ENCODE measurements at regions of chr13 and their contacts with region 1.

Region 1: GRCh38 chr13:97432917-97433726 is 847 bp upstream of the RAP2A start:
- DNase-seq: peak; percentile 100
- ATAC-seq: peak; percentile 86
- H3K4me3 ChIP-seq: peak overlapping the region; percentile 82
- H3K27ac ChIP-seq: peak overlapping the region; percentile 98
- H3K4me1 ChIP-seq: peaks cover 6% of the 10 kb centered on the region
- H3K27me3 ChIP-seq: no peaks in the 10 kb centered on the region
- CTCF ChIP-seq: no peak
- EP300 ChIP-seq: peak; percentile 45 to 61; a peak in 3 of 4 replicates
- POLR2A ChIP-seq: peak; percentile 74
- RAD21 ChIP-seq: no peak

Region 2: DNA sequence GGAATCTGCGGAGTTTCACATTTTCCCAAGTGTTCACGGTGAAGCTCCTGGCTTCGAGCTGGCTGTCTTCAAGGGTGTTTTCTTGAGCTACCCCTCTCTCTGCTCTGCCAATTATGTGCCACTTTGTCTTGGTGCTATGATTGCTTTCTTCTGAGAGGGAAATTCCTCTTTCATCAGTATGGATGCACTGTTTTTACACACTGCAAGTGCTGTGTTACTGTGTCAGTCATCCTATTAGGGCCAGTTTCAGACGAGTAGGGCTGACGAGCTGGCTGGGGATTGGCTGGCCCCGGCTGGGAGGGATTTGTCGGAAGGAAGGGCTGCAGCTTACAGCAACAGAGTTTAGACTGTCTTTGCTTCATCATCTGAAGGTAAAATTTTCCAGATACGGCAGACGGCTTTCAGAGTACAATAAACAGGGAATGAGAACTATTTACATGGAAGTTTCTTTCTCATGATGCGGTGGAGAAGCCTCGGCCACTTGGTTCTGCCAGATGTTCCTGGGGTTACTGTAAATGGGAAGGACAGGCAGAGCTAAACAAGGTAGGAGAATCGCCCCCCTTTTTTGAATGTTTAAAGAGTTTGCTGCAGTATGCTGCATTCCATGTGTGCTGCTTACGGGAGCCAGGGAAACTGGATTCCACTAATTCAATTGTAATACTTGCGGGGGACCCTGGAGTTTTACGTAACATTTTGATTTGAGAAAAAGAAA is 211.0 kb before region 1 on chr13 and contains the start of gene MBNL2:
- CTCF ChIA-PET with region 1: interaction called, 6 read pairs
- POLR2A ChIA-PET with region 1: interaction called, 37 read pairs
- RAD21 ChIA-PET with region 1: interaction called, 20 read pairs
- SMC1A ChIA-PET with region 1: interaction called, 29 read pairs
- in situ Hi-C with region 1: no loop called
- intact Hi-C with region 1: loop called (anchors 2 kb)
- DNase-seq: peak; percentile 77
- ATAC-seq: peak; percentile 92
- H3K4me3 ChIP-seq: peak within 1 kb of the TSS; percentile 70
- H3K27ac ChIP-seq: peak within 1 kb of the TSS; percentile 76
- H3K4me1 ChIP-seq: peaks cover 7% of the 10 kb centered on the region; the same call in 1 of the 2 replicates
- H3K27me3 ChIP-seq: no peaks in the 10 kb centered on the region
- CTCF ChIP-seq: no peak
- EP300 ChIP-seq: 0 out of 4 replicates have a peak, but pooled peaks of 1 of the 2 experiments have one; percentile 15
- POLR2A ChIP-seq: peak; percentile 56
- RAD21 ChIP-seq: no peak
- polyA plus RNA-seq, gene MBNL2: 1.6 to 2.1 TPM

Region 3: DNA sequence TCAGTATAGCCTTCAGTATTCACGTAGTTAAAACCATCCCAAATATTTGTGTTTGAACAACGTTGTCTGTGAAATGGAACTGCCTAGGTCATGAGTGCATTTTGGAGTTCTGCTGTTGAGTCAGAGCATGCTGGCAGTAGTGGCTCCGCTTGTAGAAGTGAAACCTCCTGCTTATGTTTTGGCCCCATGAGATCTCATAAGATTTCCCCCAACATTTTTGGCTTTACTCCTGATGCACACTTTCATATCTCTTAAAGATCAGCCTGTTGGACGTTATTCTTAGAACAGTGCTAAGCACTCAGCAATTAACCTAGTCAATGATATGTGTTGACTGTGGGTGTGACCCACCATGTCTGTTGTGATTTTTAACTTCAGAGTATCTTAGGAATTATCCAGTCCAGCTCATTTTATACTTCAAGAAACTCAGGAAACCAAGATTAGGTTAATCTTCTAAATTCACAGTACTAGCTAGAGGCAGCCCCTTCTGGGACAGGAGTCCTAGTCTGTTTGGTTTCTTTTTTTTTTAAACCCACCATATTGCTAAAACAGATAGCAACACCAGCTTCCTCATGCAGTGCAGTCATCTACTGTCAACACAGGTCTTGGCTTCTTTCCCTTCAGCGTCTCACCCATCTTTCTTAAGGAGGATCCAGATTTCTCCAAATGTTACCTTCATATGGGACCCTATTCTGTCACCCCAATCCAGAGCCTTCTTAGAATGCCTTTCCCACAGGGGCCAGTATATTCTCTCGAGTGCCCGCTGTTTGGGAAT is 27.1 kb after region 1 on chr13:
- CTCF ChIA-PET with region 1: interaction called, 17 read pairs
- POLR2A ChIA-PET with region 1: interaction called, 108 read pairs
- RAD21 ChIA-PET with region 1: interaction called, 179 read pairs
- SMC1A ChIA-PET with region 1: interaction called, 165 read pairs
- in situ Hi-C with region 1: no loop called
- intact Hi-C with region 1: loop called (anchors 1 kb)
- DNase-seq: peak; percentile 91
- ATAC-seq: peak; percentile 94
- H3K4me3 ChIP-seq: peak overlapping the region; percentile 53
- H3K27ac ChIP-seq: peak overlapping the region; percentile 92
- H3K4me1 ChIP-seq: peaks cover 39% of the 10 kb centered on the region
- H3K27me3 ChIP-seq: no peaks in the 10 kb centered on the region
- CTCF ChIP-seq: no peak
- EP300 ChIP-seq: peak; percentile 82 to 85
- POLR2A ChIP-seq: no peak
- RAD21 ChIP-seq: peak; percentile 9; the same call in 1 of the 2 replicates

Region 4: DNA sequence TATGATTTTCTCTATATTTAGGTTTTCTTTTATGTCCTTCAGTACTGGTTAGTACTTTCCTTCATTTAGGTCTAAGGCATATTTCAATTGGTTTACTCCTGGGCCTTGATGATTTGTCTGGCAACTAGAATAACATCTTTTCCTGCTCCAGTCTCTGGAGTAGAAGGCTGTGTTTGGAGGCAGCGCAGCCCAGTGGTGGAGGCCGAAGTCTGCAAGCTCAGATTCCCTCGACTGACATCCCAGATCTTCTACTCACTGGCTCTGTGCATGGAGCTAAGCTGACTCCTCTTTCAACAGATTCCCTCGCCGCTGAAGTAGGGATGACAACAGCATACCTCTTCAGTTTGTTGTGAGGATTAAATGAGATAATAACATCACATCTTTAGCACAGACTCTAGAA is 141.8 kb after region 1 on chr13:
- CTCF ChIA-PET with region 1: interaction called, 15 read pairs
- POLR2A ChIA-PET with region 1: interaction called, 12 read pairs
- RAD21 ChIA-PET with region 1: interaction called, 14 read pairs
- SMC1A ChIA-PET with region 1: interaction called, 11 read pairs
- in situ Hi-C with region 1: no loop called
- intact Hi-C with region 1: no loop called
- DNase-seq: no peak
- ATAC-seq: peak; percentile 89
- H3K4me3 ChIP-seq: no peak overlapping the region
- H3K27ac ChIP-seq: no peak overlapping the region
- H3K4me1 ChIP-seq: no peaks in the 10 kb centered on the region
- H3K27me3 ChIP-seq: no peaks in the 10 kb centered on the region; a peak in 1 of 4 replicates
- CTCF ChIP-seq: peak; percentile 57 to 82 (median 75); a peak in 5 of 6 replicates
- EP300 ChIP-seq: no peak
- POLR2A ChIP-seq: no peak
- RAD21 ChIP-seq: peak; percentile 81

Region 5: DNA sequence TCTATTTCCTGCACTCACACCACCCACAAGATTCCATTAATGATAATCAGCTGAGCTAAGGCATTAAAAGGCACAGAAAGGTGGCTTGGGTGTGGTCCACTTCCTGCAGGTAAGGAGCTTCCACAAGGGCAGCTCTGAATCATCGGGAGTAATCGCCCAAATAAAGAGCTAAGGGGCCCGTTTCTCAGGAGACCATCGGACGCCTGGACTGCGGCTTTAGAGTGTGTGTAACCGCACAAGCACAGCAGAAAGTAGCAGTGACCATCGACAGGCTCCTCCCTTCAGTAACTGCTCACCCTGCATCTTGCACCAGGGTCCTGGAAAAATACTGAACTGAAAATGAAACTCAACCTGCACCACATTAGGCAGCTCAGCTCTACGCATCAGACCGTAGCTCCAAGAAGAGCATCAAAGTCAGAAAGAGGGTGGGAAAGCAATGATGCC is 1137.8 kb after region 1 on chr13:
- CTCF ChIA-PET with region 1: interaction called, 3 read pairs
- POLR2A ChIA-PET with region 1: no interaction called
- RAD21 ChIA-PET with region 1: no interaction called
- SMC1A ChIA-PET with region 1: no interaction called
- in situ Hi-C with region 1: loop called (anchors 25 kb)
- intact Hi-C with region 1: no loop called
- DNase-seq: peak; percentile 92
- ATAC-seq: peak; percentile 83
- H3K4me3 ChIP-seq: peak overlapping the region; percentile 87
- H3K27ac ChIP-seq: peak overlapping the region; percentile 73
- H3K4me1 ChIP-seq: peaks cover 42% of the 10 kb centered on the region
- H3K27me3 ChIP-seq: no peaks in the 10 kb centered on the region
- CTCF ChIP-seq: no peak
- EP300 ChIP-seq: peak; percentile 29 to 40; a peak in 2 of 4 replicates
- POLR2A ChIP-seq: no peak
- RAD21 ChIP-seq: no peak

Measured in GM12878 (cell line).